Esophagus squamous epithelium (tissue), 5 donors: ENCODE measurements at regions of chr2 and their contacts with region 1.

Region 1: GRCh38 chr2:85813982-85814801 is 60.4 kb downstream of the ATOH8 start:
- DNase-seq: peak; percentile 40
- H3K4me3 ChIP-seq: no peak overlapping the region
- H3K27ac ChIP-seq: no peak overlapping the region
- H3K4me1 ChIP-seq: peaks cover 0 to 25% (median 10%) of the 10 kb centered on the region in 3 donors
- H3K27me3 ChIP-seq: peaks cover 0 to 16% (median 0%) of the 10 kb centered on the region in 4 donors
- CTCF ChIP-seq: peak; percentile 65 to 97 (median 94)
- POLR2A ChIP-seq: no peak

Region 2: GRCh38 chr2:85662899-85663593 is 151.1 kb before region 1 on chr2:
- intact Hi-C with region 1: no loop called
- DNase-seq: no peak
- H3K4me3 ChIP-seq: no peak overlapping the region
- H3K27ac ChIP-seq: peak overlapping the region in 1 of 4 donors; percentile 60
- H3K4me1 ChIP-seq: peaks cover 0 to 27% (median 0%) of the 10 kb centered on the region in 3 donors
- H3K27me3 ChIP-seq: no peaks in the 10 kb centered on the region
- CTCF ChIP-seq: no peak
- POLR2A ChIP-seq: no peak

Region 3: DNA sequence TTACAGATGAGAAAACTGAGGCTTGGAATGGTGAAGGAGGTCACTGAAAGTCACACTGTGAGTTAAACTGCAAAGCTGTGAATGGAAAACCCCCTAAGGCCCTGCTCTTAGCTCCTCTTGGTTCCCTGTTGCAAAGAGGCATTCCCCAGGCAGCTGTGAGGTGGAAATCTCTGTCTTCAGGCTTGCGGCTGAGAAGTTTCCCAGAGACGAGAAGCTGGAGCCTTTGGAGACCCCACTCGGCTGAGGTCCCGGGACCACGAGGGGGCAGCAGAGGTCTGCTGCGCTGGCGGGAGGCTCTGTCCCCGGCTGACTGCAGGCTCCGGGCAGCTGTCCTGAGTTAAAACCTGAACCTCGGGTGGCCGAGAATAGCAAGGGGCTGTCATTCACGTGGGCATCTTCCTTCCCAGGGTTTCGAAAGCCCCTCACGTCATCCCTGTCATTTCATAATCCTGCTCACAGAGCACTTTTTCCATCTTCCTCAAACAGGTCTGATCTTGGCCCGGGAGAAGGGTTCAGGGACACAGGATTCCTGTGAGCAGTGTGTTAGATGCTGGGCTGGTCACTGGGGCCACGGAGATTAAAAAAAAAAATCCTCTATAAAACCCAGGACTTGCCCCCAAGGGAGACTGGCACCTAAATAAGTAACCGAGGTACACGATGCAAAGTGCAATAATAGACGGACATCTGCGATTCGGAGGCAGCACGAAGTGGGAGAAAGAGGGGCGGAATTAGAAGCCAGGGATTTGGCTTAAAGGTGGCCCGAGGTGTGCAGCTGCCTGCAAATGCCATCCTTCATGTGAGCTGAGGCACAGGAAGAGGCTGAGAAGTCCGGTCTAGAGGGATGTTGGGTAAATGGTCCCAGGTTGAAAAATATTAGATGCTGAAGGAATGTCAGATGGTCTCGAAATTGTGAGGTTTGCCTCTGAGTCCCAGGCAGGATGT is 85.0 kb before region 1 on chr2:
- intact Hi-C with region 1: loop called (anchors 5 kb)
- DNase-seq: no peak
- H3K4me3 ChIP-seq: peak overlapping the region in 1 of 4 donors; percentile 19
- H3K27ac ChIP-seq: peak overlapping the region in 3 of 4 donors; percentile 8 to 24 (median 10)
- H3K4me1 ChIP-seq: peaks cover 6 to 35% (median 8%) of the 10 kb centered on the region in 3 donors
- H3K27me3 ChIP-seq: peaks cover 0 to 6% (median 0%) of the 10 kb centered on the region in 4 donors
- CTCF ChIP-seq: peak; percentile 88 to 92 (median 90)
- POLR2A ChIP-seq: no peak